ENCODE measurements at regions of chr11 and their contacts with region 1.

Region 1: GRCh38 chr11:119055901-119056300 is 1.1 kb downstream of the HYOU1 start:
- DNase-seq: no peak
- H3K4me3 ChIP-seq: peak overlapping the region; percentile 88 to 99
- H3K27ac ChIP-seq: peak overlapping the region; percentile 87 to 89
- H3K4me1 ChIP-seq: peaks cover 0 to 23% (median 21%) of the 10 kb centered on the region in 4 donors
- H3K27me3 ChIP-seq: no peaks in the 10 kb centered on the region
- CTCF ChIP-seq: no peak

Region 2: GRCh38 chr11:119018074-119018938 is 37.6 kb before region 1 on chr11 and contains the starts of genes RPS25 and TRAPPC4:
- intact Hi-C with region 1: loop called (anchors 1 kb)
- DNase-seq: peak; percentile 95 to 98
- H3K4me3 ChIP-seq: peak within 1 kb of the TSS; percentile 76 to 88
- H3K27ac ChIP-seq: peak within 1 kb of the TSS; percentile 90 to 95
- H3K4me1 ChIP-seq: peaks cover 0 to 53% (median 34%) of the 10 kb centered on the region in 4 donors
- H3K27me3 ChIP-seq: no peaks in the 10 kb centered on the region
- CTCF ChIP-seq: no peak

Measured in tibial artery (tissue), 4 donors.